T-cell (primary cell): ENCODE measurements at regions of chr2 and their contacts with region 1.

Region 1: DNA sequence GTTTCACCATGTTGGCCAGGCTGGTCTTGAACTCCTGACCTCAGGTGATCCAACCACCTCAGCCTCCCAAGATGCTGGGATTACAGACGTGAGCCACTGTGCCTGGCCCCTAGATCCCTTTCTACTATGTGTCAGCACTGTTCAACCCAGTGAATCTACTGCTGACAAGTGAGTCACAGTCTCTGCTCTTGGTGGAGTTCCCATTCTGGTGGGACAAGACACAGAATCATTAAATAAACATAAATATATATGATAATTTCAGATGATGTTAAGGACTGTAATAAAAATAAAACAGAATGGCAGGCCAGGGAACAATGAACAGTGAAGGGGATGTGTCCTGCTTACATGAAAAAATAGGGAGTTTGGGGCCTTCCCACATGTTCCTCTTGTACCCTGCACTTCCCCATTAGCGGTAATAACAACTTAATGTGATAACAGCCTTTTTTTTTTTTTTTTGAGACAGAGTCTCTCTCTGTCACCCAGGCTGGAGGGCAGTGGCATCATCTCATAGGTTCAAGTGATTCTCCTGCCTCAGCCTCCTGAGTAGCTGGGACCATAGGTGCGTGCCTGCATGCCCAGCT is 112.2 kb downstream of the CPO start:
- DNase-seq: no peak
- ATAC-seq: no peak
- H3K4me3 ChIP-seq: no peak overlapping the region
- H3K4me3 Mint-ChIP-seq: no peak overlapping the region
- H3K27ac ChIP-seq: no peak overlapping the region
- H3K27ac Mint-ChIP-seq: no peak overlapping the region
- H3K4me1 ChIP-seq: peaks cover 3 to 4% of the 10 kb centered on the region in 2 experiments
- H3K4me1 Mint-ChIP-seq: peaks cover 7 to 9% (median 9%) of the 10 kb centered on the region in 3 donors
- H3K27me3 ChIP-seq: peaks cover 0 to 2% of the 10 kb centered on the region in 2 experiments
- H3K27me3 Mint-ChIP-seq: no peaks in the 10 kb centered on the region

Region 2: DNA sequence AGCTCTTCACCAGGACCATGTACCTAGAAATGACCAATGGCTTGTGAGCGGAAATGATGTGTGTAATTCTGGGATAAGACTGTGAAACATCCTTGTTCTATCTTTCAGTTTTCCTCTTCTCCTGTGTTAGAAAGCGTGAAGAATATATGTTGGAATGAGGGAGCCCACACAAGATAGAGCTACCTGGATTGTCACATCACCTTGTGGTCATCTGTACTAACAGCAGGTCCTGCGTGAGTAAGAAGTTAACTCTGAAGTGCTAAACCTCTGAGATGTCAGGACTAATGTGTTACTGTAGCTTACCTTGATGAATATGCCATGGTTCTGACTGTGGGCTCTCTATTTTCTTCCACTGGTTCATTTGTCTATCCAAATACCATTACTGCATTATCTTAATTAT is 210.5 kb before region 1 on chr2:
- CTCF ChIA-PET with region 1: no interaction called
- POLR2A ChIA-PET with region 1: no interaction called
- DNase-seq: no peak
- ATAC-seq: no peak
- H3K4me3 ChIP-seq: no peak overlapping the region
- H3K4me3 Mint-ChIP-seq: no peak overlapping the region
- H3K27ac ChIP-seq: no peak overlapping the region
- H3K27ac Mint-ChIP-seq: no peak overlapping the region
- H3K4me1 ChIP-seq: no peaks in the 10 kb centered on the region
- H3K4me1 Mint-ChIP-seq: no peaks in the 10 kb centered on the region
- H3K27me3 ChIP-seq: no peaks in the 10 kb centered on the region
- H3K27me3 Mint-ChIP-seq: no peaks in the 10 kb centered on the region

Region 3: DNA sequence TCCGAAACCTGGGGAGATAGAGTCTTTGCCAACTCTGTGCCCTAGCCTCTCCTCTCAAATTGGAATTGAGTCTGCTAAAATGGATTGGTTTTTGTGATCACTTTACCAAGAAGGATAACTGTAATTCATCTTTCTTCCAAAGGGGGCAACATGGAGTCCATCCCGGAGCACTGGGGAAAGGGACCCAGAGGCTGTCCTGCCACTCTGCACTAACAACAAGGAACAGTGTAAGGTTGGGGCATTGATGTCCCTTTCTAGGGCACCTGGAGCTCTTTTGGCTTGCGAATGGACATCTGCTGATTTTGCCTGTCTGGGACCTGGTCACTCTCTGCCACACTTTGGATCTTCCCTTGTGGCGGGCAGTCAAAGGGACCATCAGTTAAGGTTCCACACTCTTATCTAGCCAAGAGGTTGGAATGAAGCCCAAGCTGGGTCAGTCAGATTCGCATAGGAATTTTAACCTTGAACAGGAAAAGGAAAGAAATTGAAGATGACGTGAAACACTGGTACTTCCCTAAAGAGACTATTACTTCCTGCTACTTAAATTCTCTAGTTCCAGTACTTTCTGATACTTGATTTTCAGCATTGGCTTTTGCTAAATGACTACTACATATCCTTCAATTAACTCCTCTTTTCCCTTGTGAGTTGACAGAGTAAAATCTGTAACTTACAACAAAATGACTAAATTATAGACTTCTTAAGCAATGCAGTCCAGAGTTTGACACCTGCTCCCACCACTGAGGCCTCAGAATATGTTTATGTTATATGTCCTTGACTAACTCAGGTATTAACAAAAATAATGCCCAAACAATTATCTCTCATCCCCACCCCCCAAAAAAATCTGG is 179.0 kb after region 1 on chr2:
- CTCF ChIA-PET with region 1: no interaction called
- POLR2A ChIA-PET with region 1: interaction called in 1 of 2 experiments, 12 read pairs
- DNase-seq: peak in 1 of 35 experiments; percentile 14
- ATAC-seq: no peak
- H3K4me3 ChIP-seq: no peak overlapping the region
- H3K4me3 Mint-ChIP-seq: no peak overlapping the region
- H3K27ac ChIP-seq: no peak overlapping the region
- H3K27ac Mint-ChIP-seq: no peak overlapping the region
- H3K4me1 ChIP-seq: peaks cover 2 to 17% of the 10 kb centered on the region in 2 experiments
- H3K4me1 Mint-ChIP-seq: peaks cover 22 to 60% (median 27%) of the 10 kb centered on the region in 3 donors
- H3K27me3 ChIP-seq: peaks cover 0 to 4% of the 10 kb centered on the region in 2 experiments
- H3K27me3 Mint-ChIP-seq: no peaks in the 10 kb centered on the region